ENCODE measurements at regions of chr3 and their contacts with region 1.

Region 1: DNA sequence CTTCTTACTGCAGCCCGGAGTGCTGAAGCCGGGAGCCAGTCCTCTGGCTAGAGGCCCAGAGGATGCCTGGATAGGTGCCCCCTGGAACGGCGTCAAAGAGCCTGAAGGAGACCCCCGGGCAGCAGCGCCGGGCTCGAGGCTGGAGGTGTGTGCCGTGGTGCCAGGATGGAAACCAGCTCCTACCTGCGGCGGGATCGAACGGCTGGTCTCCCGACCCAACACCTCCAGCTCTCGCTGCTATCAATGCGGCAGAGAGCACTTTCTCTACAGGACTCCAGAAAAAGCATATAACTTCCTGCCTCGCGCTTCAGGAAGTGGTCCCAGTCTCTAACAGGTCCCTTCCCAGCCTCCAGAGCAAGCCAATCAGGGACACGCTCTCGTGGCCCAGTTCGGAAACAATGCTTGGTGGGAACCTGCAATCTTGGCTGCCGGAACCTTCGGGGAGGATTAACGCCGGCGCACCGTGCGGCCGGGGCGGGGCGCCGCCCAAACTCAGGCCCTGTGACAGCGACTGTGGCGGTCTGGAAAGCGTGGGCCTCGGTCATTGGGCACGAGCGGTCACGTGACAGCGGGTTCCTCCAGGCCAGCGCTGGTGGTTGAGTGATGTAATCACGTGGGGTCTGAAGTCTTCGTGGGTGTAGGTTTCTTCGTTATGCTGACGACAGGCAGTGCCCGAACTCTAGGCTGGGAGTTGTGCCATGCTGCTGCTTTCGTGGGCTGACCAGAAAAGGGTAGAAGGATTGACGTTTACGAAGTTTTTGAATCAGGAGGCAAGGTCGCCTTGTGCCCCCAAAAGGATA is at the start of gene SLC33A1:
- DNase-seq: peak; percentile 99
- H3K4me3 ChIP-seq: peak within 1 kb of the TSS; percentile 96
- H3K27ac ChIP-seq: peak within 1 kb of the TSS; percentile 98
- H3K4me1 ChIP-seq: peaks cover 19% of the 10 kb centered on the region
- H3K27me3 ChIP-seq: no peaks in the 10 kb centered on the region
- CTCF ChIP-seq: no peak
- total RNA-seq, gene SLC33A1: 29.4 to 30.9 TPM

Region 2: GRCh38 chr3:155093261-155093660 is 761.1 kb before region 1 on chr3:
- intact Hi-C with region 1: no loop called
- DNase-seq: no peak
- H3K4me3 ChIP-seq: no peak overlapping the region
- H3K27ac ChIP-seq: no peak overlapping the region
- H3K4me1 ChIP-seq: no peaks in the 10 kb centered on the region
- H3K27me3 ChIP-seq: no peaks in the 10 kb centered on the region
- CTCF ChIP-seq: no peak

Region 3: GRCh38 chr3:155744626-155745324 is 109.6 kb before region 1 on chr3 and contains the start of gene PLCH1:
- intact Hi-C with region 1: loop called (anchors 10 kb)
- DNase-seq: peak; percentile 85
- H3K4me3 ChIP-seq: peak within 1 kb of the TSS; percentile 71
- H3K27ac ChIP-seq: peak within 1 kb of the TSS; percentile 36
- H3K4me1 ChIP-seq: no peaks in the 10 kb centered on the region
- H3K27me3 ChIP-seq: no peaks in the 10 kb centered on the region
- CTCF ChIP-seq: no peak
- total RNA-seq, gene PLCH1: 8.2 to 11.0 TPM

Measured in colonic mucosa (tissue), 4 donors.